Activated CD4-positive, alpha-beta memory T cell treated with anti-CD3 and anti-CD28 coated beads, Interleukin-2, amount 10 ng/mL, durations not matched to agents 7 days and 5 days (primary cell): ENCODE measurements at regions of chr12 and their contacts with region 1.

Region 1: DNA sequence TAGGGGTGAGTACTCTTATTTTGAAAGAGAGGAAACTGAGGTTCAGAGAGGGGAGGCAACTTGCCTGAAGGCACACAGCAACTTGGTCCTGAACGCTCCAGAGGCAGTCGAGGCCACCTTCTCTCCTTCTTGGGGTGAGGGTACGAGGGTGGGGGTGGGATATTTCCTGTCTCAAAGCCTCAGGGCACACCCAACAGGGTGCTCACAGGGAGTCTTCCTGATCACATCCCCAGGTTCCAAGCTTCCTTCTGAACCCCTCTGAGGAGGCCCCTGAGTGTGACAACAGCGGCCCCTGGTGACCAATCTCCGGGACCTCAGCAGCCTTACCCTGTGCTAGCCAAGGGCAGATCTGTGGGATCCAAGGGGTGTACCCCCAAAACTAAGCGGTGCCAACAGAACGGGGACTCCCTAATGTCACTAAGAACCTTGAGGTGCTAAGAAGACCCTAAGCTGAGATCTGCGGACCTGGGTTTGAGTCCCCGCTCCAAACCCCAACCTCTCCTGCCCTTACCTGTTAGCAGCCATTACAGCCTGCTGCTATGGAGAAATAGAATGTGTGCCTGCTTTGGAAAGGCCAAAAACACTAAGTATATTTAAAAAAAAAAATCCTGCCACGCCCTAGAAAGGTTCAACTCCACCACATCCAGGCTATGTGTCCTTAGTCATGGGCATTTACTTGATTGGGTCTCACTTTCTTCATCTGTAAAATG is 57.9 kb downstream of the TRPV4 start:
- DNase-seq: peak; percentile 73
- H3K4me3 Mint-ChIP-seq: no peak overlapping the region
- H3K27ac Mint-ChIP-seq: no peak overlapping the region
- H3K4me1 Mint-ChIP-seq: peaks cover 6% of the 10 kb centered on the region
- H3K27me3 Mint-ChIP-seq: peaks cover 10% of the 10 kb centered on the region

Region 2: GRCh38 chr12:109518820-109519665 is 256.3 kb before region 1 on chr12:
- CTCF ChIA-PET with region 1: interaction called, 55 read pairs
- POLR2A ChIA-PET with region 1: no interaction called
- DNase-seq: peak; percentile 66
- H3K4me3 Mint-ChIP-seq: no peak overlapping the region
- H3K27ac Mint-ChIP-seq: no peak overlapping the region
- H3K4me1 Mint-ChIP-seq: no peaks in the 10 kb centered on the region
- H3K27me3 Mint-ChIP-seq: no peaks in the 10 kb centered on the region